CD8-positive, alpha-beta memory T cell (primary cell): ENCODE measurements at regions of chr3 and their contacts with region 1.

Region 1: GRCh38 chr3:11335056-11335608 is 62.9 kb downstream of the ATG7 start:
- DNase-seq: peak in 2 of 5 donors; percentile 42 to 46
- H3K4me3 ChIP-seq: no peak overlapping the region
- H3K4me3 Mint-ChIP-seq: no peak overlapping the region
- H3K27ac ChIP-seq: no peak overlapping the region
- H3K27ac Mint-ChIP-seq: peak overlapping the region in 3 of 8 donors; percentile 10 to 38 (median 36)
- H3K4me1 ChIP-seq: no peaks in the 10 kb centered on the region
- H3K4me1 Mint-ChIP-seq: peaks cover 0 to 5% (median 3%) of the 10 kb centered on the region in 3 donors
- H3K27me3 ChIP-seq: no peaks in the 10 kb centered on the region
- H3K27me3 Mint-ChIP-seq: no peaks in the 10 kb centered on the region

Region 2: GRCh38 chr3:11236595-11237461 is 98.3 kb before region 1 on chr3:
- CTCF ChIA-PET with region 1: interaction called, 43 read pairs
- POLR2A ChIA-PET with region 1: no interaction called
- DNase-seq: peak; percentile 56 to 84 (median 71)
- H3K4me3 ChIP-seq: no peak overlapping the region
- H3K4me3 Mint-ChIP-seq: no peak overlapping the region
- H3K27ac ChIP-seq: no peak overlapping the region
- H3K27ac Mint-ChIP-seq: no peak overlapping the region
- H3K4me1 ChIP-seq: no peaks in the 10 kb centered on the region
- H3K4me1 Mint-ChIP-seq: no peaks in the 10 kb centered on the region
- H3K27me3 ChIP-seq: no peaks in the 10 kb centered on the region
- H3K27me3 Mint-ChIP-seq: peaks cover 3 to 19% of the 10 kb centered on the region in 2 donors

Region 3: DNA sequence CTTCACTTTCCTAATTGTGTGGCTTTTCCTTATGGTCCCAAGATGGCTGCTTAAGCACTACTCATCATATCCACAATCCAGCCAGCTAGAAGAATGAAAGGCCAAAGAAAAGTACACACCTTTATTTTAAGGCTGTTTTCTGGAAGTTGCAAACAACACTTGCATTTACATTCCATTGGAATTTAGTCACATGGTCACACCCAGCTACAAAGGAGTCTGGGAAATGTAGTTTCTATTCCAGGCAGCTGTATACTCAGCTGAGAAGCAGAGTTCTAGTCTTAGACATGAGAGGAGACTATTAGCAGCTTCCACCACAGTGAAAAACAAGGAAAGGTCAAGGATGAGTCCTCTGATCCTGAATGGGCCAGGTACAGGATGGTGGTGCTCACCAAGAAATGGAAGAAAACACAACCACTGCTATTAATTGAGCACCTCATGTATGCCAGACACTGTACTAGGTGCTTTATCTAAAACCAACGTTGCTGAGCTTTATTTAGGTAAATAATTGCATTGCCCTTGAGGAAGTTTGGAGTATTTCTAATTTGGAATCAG is 90.9 kb before region 1 on chr3:
- CTCF ChIA-PET with region 1: interaction called, 15 read pairs
- POLR2A ChIA-PET with region 1: no interaction called
- DNase-seq: no peak
- H3K4me3 ChIP-seq: no peak overlapping the region
- H3K4me3 Mint-ChIP-seq: no peak overlapping the region
- H3K27ac ChIP-seq: no peak overlapping the region
- H3K27ac Mint-ChIP-seq: no peak overlapping the region
- H3K4me1 ChIP-seq: no peaks in the 10 kb centered on the region
- H3K4me1 Mint-ChIP-seq: no peaks in the 10 kb centered on the region
- H3K27me3 ChIP-seq: no peaks in the 10 kb centered on the region
- H3K27me3 Mint-ChIP-seq: peaks cover 0 to 2% of the 10 kb centered on the region in 2 donors